ENCODE measurements at regions of chr2 and their contacts with region 1.

Region 1: DNA sequence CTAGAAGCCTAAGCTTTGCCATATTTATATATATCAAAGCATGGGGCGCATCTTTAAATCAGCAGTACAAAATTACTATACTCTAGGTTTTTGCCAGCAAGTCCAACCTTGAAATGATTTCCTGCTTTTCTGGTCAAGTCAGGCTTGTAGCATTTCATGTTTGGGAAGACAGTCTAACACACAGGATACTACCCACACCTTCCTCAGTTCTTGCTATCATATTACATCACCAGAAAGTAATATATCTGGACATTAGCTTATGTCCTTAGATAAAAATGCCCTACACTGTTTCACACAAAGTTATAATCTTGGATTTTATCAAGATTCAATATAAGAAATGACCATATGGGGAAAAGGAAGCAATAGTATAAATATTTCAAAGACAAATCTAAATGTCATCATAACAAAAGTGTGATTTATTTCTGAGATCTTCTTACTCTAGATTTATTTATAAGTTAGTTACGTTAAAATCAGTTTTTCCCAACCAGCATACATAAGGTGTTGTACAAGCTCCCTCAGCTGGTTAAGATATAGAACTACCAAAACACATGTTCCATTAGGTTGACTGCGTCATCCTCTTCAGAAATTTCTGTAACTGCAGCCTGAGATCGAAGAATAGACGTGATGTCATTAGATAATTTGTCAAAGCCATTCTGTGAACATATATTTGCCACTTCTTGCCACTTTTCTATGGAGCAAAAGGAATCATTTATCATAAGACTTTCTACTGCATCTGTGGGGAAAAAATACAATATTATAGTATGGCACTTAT is 56.7 kb downstream of the CLHC1 start:
- DNase-seq: no peak
- ATAC-seq: peak; percentile 66

Region 2: DNA sequence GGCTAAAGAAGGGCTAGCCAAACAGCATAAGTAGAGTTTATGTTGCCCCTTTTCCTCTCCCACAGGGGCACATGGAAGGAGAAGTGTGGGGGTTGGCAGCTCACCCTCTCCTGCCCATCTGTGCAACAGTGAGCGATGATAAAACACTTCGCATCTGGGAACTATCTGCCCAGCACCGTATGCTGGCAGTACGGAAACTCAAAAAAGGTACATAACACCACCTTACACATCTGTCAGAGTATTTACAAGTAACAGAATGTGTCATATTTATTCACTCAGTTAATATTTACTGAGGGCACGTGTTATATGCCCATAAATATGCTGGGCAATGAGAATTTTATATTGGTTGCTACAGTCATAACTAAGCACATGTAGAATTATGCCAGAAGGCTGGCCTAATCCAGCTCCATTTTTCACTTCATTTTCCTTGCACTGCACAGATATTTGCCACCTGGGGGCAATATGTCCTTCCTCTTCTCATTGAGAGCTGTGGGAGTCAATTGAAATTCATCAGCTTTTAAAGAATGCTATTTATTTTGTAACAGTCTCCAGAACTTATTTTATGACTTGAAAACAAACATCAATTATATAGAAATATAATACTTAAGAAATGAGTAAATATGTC is 275.8 kb before region 1 on chr2:
- intact Hi-C with region 1: loop called (anchors 10 kb)
- DNase-seq: no peak
- ATAC-seq: peak; percentile 64

Region 3: GRCh38 chr2:55014962-55015939 is 160.2 kb before region 1 on chr2:
- intact Hi-C with region 1: loop called (anchors 2 kb)
- DNase-seq: no peak
- ATAC-seq: peak; percentile 81

Measured in left ventricle myocardium superior (tissue), 1 donor.